ENCODE measurements at regions of chr21 and their contacts with region 1.

Region 1: DNA sequence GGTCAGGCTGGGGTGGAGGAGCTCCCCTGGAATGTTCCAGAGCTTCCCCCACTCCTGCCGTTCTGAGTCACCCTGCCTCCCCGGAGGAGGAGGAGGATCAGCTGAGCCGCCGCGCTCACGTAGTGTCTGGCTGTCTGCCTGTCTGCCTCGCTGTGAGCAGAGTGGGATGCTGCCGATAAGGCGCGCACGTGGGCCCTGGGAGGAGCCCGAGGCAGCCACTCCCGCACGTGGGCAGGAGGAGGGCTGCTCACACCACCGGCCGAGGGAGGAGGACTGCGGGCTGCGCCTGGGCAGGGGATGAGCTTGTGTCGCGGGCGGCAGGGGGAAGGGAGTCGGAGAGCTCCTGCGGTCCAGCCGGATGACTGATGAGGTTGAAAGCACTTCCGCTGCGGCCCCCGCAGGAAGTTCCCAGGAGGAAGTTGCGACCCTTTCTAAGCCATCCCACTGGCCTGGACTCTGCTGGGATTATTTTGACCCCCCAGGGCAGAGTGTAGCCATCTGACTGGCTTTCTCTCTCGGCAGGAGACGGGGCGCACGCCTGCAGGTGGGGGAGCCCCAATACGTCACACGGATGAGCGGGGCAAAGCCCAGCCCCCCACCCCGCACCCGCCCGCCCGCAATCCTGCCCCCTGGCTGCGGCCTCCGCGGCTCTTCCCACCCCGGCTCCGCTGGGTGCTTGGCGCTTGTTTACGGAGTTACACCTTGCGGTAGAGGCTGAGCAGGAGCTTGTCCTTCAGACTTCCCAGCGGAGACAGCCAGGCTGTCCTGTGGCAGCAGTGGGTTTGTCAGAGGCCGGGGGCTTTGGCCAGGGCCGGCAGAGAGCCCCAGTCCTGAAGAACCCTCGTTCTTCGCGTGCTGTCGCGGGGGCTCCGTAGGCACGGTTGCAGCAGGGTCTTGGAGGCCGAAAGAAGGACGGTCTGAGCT is 9.8 kb downstream of the PDXK start:
- DNase-seq: peak; percentile 52 to 88 (median 65)
- ATAC-seq: peak; percentile 90
- H3K4me3 ChIP-seq: peak overlapping the region; percentile 50
- H3K4me3 Mint-ChIP-seq: peak overlapping the region; percentile 70 to 92 (median 86)
- H3K27ac ChIP-seq: peak overlapping the region; percentile 58
- H3K27ac Mint-ChIP-seq: peak overlapping the region; percentile 56 to 90 (median 80)
- H3K4me1 ChIP-seq: peaks cover 14 to 25% of the 10 kb centered on the region in 2 donors
- H3K4me1 Mint-ChIP-seq: peaks cover 37 to 68% (median 54%) of the 10 kb centered on the region in 7 donors
- H3K27me3 ChIP-seq: no peaks in the 10 kb centered on the region
- H3K27me3 Mint-ChIP-seq: no peaks in the 10 kb centered on the region

Region 2: GRCh38 chr21:43775795-43776430 is 47.2 kb after region 1 on chr21 and contains the start of gene CSTB:
- CTCF ChIA-PET with region 1: no interaction called
- POLR2A ChIA-PET with region 1: no interaction called
- intact Hi-C with region 1: loop called in 1 of 2 experiments (anchors 5 kb)
- DNase-seq: peak; percentile 62 to 91 (median 78)
- ATAC-seq: peak; percentile 85
- H3K4me3 ChIP-seq: peak within 1 kb of the TSS; percentile 64
- H3K4me3 Mint-ChIP-seq: peak within 1 kb of the TSS; percentile 89 to 96 (median 94)
- H3K27ac ChIP-seq: peak within 1 kb of the TSS; percentile 77
- H3K27ac Mint-ChIP-seq: peak within 1 kb of the TSS; percentile 80 to 91 (median 84)
- H3K4me1 ChIP-seq: peaks cover 11 to 18% of the 10 kb centered on the region in 2 donors
- H3K4me1 Mint-ChIP-seq: peaks cover 29 to 59% (median 41%) of the 10 kb centered on the region in 7 donors
- H3K27me3 ChIP-seq: no peaks in the 10 kb centered on the region
- H3K27me3 Mint-ChIP-seq: no peaks in the 10 kb centered on the region
- total RNA-seq, gene CSTB: 14.7 to 66.5 (median 36.6) TPM